ENCODE measurements at regions of chr13 and their contacts with region 1.

Region 1: GRCh38 chr13:99258210-99258860 is at the start of gene GPR18:
- DNase-seq: no peak
- H3K4me3 Mint-ChIP-seq: peak within 1 kb of the TSS; percentile 88
- H3K27ac Mint-ChIP-seq: peak within 1 kb of the TSS; percentile 89
- H3K4me1 Mint-ChIP-seq: peaks cover 66% of the 10 kb centered on the region
- H3K27me3 Mint-ChIP-seq: no peaks in the 10 kb centered on the region
- total RNA-seq, gene GPR18: 12.0 and 15.9 TPM in 2 replicates

Region 2: GRCh38 chr13:98853771-98854221 is 404.5 kb before region 1 on chr13:
- intact Hi-C with region 1: loop called (anchors 5 kb)
- DNase-seq: peak; percentile 59
- H3K4me3 Mint-ChIP-seq: peak overlapping the region; percentile 36
- H3K27ac Mint-ChIP-seq: peak overlapping the region; percentile 13
- H3K4me1 Mint-ChIP-seq: peaks cover 21% of the 10 kb centered on the region
- H3K27me3 Mint-ChIP-seq: no peaks in the 10 kb centered on the region

Region 3: GRCh38 chr13:99228737-99229691 is 29.3 kb before region 1 on chr13:
- intact Hi-C with region 1: loop called (anchors 1 kb)
- DNase-seq: no peak
- H3K4me3 Mint-ChIP-seq: peak overlapping the region; percentile 76
- H3K27ac Mint-ChIP-seq: peak overlapping the region; percentile 93
- H3K4me1 Mint-ChIP-seq: peaks cover 63% of the 10 kb centered on the region
- H3K27me3 Mint-ChIP-seq: peaks cover 2% of the 10 kb centered on the region

Region 4: GRCh38 chr13:99237981-99238662 is 20.2 kb before region 1 on chr13:
- intact Hi-C with region 1: loop called (anchors 2 kb)
- DNase-seq: no peak
- H3K4me3 Mint-ChIP-seq: peak overlapping the region; percentile 64
- H3K27ac Mint-ChIP-seq: peak overlapping the region; percentile 87
- H3K4me1 Mint-ChIP-seq: peaks cover 44% of the 10 kb centered on the region
- H3K27me3 Mint-ChIP-seq: peaks cover 3% of the 10 kb centered on the region

Region 5: GRCh38 chr13:99269627-99270241 is 11.4 kb after region 1 on chr13:
- intact Hi-C with region 1: loop called (anchors 1 kb)
- DNase-seq: no peak
- H3K4me3 Mint-ChIP-seq: no peak overlapping the region
- H3K27ac Mint-ChIP-seq: no peak overlapping the region
- H3K4me1 Mint-ChIP-seq: peaks cover 55% of the 10 kb centered on the region
- H3K27me3 Mint-ChIP-seq: no peaks in the 10 kb centered on the region

Region 6: GRCh38 chr13:99296398-99296797 is 38.1 kb after region 1 on chr13:
- intact Hi-C with region 1: loop called (anchors 2 kb)
- DNase-seq: no peak
- H3K4me3 Mint-ChIP-seq: peak overlapping the region; percentile 77
- H3K27ac Mint-ChIP-seq: peak overlapping the region; percentile 95
- H3K4me1 Mint-ChIP-seq: peaks cover 73% of the 10 kb centered on the region
- H3K27me3 Mint-ChIP-seq: no peaks in the 10 kb centered on the region

Region 7: DNA sequence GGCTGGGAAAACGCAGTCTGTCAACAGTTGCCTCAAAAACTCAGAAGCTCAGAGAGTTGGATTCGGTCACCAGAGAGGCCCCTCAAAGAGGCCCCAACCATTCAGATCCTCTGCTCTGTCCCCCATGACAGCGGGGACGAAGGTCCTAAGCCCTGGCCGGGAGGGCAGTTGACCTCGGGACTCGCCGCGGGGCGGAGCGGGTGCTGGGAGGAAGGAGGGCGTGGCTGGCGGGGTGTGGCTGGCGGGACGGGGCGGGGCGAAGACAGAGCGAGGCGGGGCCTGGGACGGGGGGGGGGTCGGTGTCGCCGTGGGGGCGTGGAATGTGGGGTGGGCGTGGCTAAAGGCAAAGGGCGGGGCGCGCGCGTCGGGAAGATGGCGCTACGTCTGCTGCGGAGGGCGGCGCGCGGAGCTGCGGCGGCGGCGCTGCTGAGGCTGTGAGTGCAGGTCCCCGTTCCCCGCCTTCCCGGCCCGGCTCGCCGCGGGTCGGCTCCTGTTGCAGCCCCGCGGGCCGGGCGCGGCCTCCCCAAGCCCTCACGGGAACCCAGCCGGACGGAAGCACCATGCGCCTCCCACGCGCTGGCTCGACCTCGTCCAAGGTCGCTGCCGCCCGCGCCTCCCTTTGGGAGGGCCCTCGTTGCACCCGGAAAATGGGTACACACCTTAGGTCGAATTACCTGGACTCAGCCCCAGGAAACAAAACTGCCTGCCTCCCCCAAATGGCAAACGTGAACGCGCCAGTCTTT is 348.2 kb after region 1 on chr13:
- intact Hi-C with region 1: loop called (anchors 1 kb)
- DNase-seq: peak; percentile 82
- H3K4me3 Mint-ChIP-seq: peak within 1 kb of the TSS; percentile 89
- H3K27ac Mint-ChIP-seq: peak within 1 kb of the TSS; percentile 81
- H3K4me1 Mint-ChIP-seq: peaks cover 29% of the 10 kb centered on the region
- H3K27me3 Mint-ChIP-seq: peaks cover 4% of the 10 kb centered on the region

Region 8: DNA sequence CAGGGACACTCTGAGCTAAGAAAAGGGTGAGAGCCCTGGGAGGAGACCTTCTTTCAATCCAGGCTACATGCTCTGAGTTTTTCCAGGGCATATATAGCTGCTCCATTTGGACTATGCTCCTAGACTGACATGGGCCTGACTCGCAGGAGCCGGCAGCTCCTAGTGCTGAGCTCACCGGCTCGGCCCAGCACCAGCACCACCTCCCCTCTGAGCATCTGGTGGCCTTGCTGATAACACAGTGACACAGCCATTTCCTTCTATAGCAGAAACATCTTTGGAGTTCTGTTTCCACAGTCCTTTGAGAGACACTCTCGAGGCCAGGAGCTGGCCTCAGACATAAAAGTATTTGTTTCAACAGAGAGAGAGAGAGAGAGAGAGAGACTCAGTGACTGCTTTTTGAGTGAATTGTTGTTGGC is 427.8 kb after region 1 on chr13:
- intact Hi-C with region 1: no loop called
- DNase-seq: no peak
- H3K4me3 Mint-ChIP-seq: no peak overlapping the region
- H3K27ac Mint-ChIP-seq: no peak overlapping the region
- H3K4me1 Mint-ChIP-seq: no peaks in the 10 kb centered on the region
- H3K27me3 Mint-ChIP-seq: peaks cover 10% of the 10 kb centered on the region

Measured in activated T-helper 1 cell treated with anti-CD3 and anti-CD28 coated beads, Interleukin-12 subunit alpha, Interleukin-12 subunit beta, Interleukin-2, Interleukin-4 antibody, amounts not matched to agents 30 ng/mL and 10 ng/mL and 1 ng/mL, durations not matched to agents 14 hours and 24 hours and 36 hours (primary cell).